ENCODE measurements at regions of chr10 and their contacts with region 1.

Region 1: DNA sequence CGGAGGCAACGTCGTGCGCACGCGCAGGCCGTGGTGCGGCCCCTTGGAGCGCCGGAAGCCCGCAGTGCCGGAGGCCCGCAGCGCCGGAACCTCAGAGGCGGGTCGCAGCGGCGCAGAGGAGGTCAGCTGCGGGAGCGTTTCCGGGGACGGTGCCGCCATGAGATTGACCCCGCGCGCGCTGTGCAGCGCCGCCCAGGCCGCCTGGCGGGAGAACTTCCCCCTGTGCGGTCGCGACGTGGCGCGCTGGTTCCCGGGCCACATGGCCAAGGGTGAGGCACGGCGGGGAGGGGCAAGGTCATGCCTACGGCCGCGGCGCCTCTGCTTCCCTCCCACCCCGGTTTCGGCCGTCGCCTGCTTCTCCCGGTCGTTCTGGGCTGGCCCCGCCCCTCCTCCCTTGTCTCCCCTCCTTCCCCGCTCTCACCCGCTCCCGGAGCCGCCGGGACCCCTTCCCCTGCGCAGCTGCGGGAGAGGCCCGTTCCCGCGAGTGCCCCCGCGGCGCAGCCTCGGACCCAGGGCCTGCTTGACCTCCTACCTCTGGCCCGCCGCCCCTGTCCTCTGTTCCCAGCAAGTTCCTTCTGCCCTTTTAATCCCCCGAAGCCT is at the start of gene MTG1:
- DNase-seq: peak; percentile 85 to 92
- ATAC-seq: peak; percentile 95 to 97
- H3K4me3 ChIP-seq: peak within 1 kb of the TSS; percentile 84 to 99 (median 90)
- H3K27ac ChIP-seq: peak within 1 kb of the TSS; percentile 84 to 96 (median 90)
- H3K4me1 ChIP-seq: peaks cover 9 to 11% of the 10 kb centered on the region in 2 donors
- H3K27me3 ChIP-seq: no peaks in the 10 kb centered on the region
- CTCF ChIP-seq: peak; percentile 25 to 53 (median 44)
- POLR2A ChIP-seq: peak; percentile 66 to 82
- total RNA-seq, gene MTG1: 12.2 to 23.9 (median 14.1) TPM

Region 2: GRCh38 chr10:133261726-133262325 is 132.3 kb before region 1 on chr10:
- in situ Hi-C with region 1: no loop called
- intact Hi-C with region 1: loop called (anchors 5 kb)
- DNase-seq: peak; percentile 76 to 86
- ATAC-seq: peak; percentile 85 to 87
- H3K4me3 ChIP-seq: peak overlapping the region; percentile 67 to 95 (median 80)
- H3K27ac ChIP-seq: peak overlapping the region; percentile 86 to 97 (median 95)
- H3K4me1 ChIP-seq: peaks cover 22 to 27% of the 10 kb centered on the region in 2 donors
- H3K27me3 ChIP-seq: no peaks in the 10 kb centered on the region
- CTCF ChIP-seq: no peak
- POLR2A ChIP-seq: peak; percentile 64 to 69

Region 3: DNA sequence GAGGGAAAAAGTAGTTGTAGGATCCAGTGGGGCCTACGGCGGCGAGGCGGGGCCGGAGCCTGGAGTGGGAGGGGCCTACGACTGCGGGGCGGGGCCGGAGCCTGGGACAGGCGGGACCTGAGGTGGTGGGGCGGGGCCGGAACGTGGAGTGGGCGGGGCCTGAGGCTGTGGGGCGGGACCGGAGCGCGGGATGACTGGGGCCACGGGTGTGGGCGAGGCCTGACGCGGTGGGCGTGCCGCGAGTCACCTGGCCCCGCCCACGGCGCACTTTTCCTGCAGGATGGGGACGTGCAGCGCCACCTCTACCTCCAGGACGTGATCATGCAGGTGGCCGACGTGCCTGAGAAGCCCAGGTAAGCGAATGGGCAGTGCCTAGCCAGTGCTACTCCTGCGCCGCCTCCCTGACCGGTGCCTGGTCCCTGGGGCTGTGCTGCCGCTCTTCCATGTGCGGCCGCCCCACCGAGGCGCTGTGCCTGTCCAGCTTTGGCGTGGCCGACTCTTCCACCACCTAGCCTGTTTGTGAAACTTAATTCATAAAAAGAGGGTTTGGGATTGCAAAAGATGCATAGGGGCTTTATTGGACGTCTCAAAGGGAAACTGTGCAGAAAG is 84.9 kb before region 1 on chr10:
- in situ Hi-C with region 1: no loop called
- intact Hi-C with region 1: loop called (anchors 2 kb)
- DNase-seq: peak; percentile 89 to 92
- ATAC-seq: peak; percentile 90 to 91
- H3K4me3 ChIP-seq: peak overlapping the region; percentile 77 to 99 (median 92)
- H3K27ac ChIP-seq: peak overlapping the region; percentile 81 to 99 (median 90)
- H3K4me1 ChIP-seq: peaks cover 24 to 26% of the 10 kb centered on the region in 2 donors
- H3K27me3 ChIP-seq: no peaks in the 10 kb centered on the region
- CTCF ChIP-seq: no peak
- POLR2A ChIP-seq: no peak

Region 4: DNA sequence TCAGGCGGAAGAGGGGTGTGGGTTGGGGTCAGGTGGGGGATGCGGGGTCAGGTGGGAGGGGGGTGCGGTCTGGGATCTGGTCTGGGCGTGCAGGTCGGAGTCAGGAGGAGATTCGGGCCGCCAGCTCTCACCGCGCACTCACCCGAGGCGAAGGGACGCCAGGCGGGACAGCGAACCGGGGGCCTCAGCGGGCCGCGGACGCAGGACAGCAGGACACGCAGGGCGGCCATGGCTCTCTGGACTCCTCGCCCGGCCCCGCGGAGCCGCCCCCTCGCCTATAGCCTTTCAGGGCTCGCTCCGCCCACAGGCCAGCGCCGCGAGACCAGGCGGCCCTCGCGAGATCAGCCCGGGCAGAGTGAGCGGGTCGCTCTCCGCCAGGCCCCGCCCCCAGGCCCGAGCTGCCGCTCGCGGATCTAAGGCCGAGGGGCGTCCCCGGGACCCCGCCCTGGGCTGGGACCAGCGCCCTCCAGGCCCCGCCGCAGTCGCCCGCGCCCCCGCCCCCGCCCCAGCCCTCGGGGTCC is 21.0 kb before region 1 on chr10 and contains the start of gene ECHS1:
- in situ Hi-C with region 1: no loop called
- intact Hi-C with region 1: loop called (anchors 1 kb)
- DNase-seq: peak; percentile 86 to 93
- ATAC-seq: peak; percentile 98
- H3K4me3 ChIP-seq: peak within 1 kb of the TSS; percentile 71 to 88 (median 80)
- H3K27ac ChIP-seq: peak within 1 kb of the TSS; percentile 71 to 88 (median 86)
- H3K4me1 ChIP-seq: peaks cover 14 to 15% of the 10 kb centered on the region in 2 donors
- H3K27me3 ChIP-seq: no peaks in the 10 kb centered on the region
- CTCF ChIP-seq: no peak
- POLR2A ChIP-seq: peak; percentile 53 to 59
- total RNA-seq, gene ECHS1: 96.7 to 123 (median 106) TPM

Region 5: GRCh38 chr10:133378251-133379096 is 15.7 kb before region 1 on chr10:
- in situ Hi-C with region 1: no loop called
- intact Hi-C with region 1: loop called (anchors 1 kb)
- DNase-seq: peak in 1 of 2 donors; percentile 41
- ATAC-seq: peak; percentile 67 to 70
- H3K4me3 ChIP-seq: peak overlapping the region; percentile 93 to 98 (median 96)
- H3K27ac ChIP-seq: peak overlapping the region; percentile 76 to 87 (median 80)
- H3K4me1 ChIP-seq: peaks cover 14 to 17% of the 10 kb centered on the region in 2 donors
- H3K27me3 ChIP-seq: no peaks in the 10 kb centered on the region
- CTCF ChIP-seq: no peak
- POLR2A ChIP-seq: peak; percentile 20 to 35

Region 6: DNA sequence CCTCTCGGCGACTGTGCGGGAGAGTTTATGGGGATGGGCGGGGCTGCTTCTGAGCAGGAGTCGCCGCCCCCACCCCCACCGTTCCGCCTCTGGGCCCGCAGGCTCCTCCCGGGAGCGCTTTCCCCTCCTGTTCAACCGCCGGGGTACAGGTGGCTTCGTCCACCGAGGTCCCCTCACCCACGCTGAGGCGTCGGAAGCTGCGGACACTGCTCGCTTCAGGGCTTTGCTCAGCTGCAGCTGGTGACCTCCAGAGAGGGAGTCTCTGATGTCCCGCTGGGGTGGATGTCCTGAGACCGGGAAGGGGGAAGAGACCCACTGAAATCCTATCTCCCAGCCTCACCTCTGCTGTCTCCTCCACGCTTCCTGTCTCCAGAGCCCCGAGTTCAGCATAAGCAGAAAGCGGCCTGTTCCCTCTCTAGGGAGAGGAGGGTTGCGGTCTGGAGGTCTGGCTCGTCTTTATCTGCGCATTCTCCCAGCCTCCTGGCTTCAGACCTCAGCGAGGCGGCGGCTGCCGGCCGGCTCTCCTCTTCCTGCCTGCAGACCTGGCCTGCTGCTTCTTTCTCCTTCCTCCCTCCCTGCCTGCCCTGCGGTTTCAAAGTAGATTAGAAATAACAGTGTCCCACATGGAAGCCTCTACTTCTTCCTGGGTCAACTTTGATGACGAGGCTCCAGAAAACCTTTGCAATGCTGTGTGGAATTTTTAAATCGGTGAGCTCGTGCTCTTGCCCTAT is 134.8 kb after region 1 on chr10:
- in situ Hi-C with region 1: no loop called
- intact Hi-C with region 1: no loop called
- DNase-seq: no peak
- ATAC-seq: no peak
- H3K4me3 ChIP-seq: peak overlapping the region; percentile 17 to 48 (median 33)
- H3K27ac ChIP-seq: no peak overlapping the region
- H3K4me1 ChIP-seq: no peaks in the 10 kb centered on the region
- H3K27me3 ChIP-seq: peaks cover 17 to 34% (median 32%) of the 10 kb centered on the region in 3 donors
- CTCF ChIP-seq: no peak
- POLR2A ChIP-seq: no peak